Activated naive CD4-positive, alpha-beta T cell treated with anti-CD3 and anti-CD28 coated beads for 36 hours (primary cell): ENCODE measurements at regions of chr12 and their contacts with region 1.

Region 1: GRCh38 chr12:57452937-57453509 is 2.1 kb upstream of the INHBE start:
- DNase-seq: peak; percentile 82
- H3K4me3 Mint-ChIP-seq: no peak overlapping the region
- H3K27ac Mint-ChIP-seq: peak overlapping the region; percentile 19
- H3K4me1 Mint-ChIP-seq: peaks cover 17% of the 10 kb centered on the region
- H3K27me3 Mint-ChIP-seq: no peaks in the 10 kb centered on the region

Region 2: GRCh38 chr12:57213058-57213715 is 239.8 kb before region 1 on chr12:
- CTCF ChIA-PET with region 1: interaction called, 16 read pairs
- intact Hi-C with region 1: no loop called
- DNase-seq: peak; percentile 92
- H3K4me3 Mint-ChIP-seq: no peak overlapping the region
- H3K27ac Mint-ChIP-seq: no peak overlapping the region
- H3K4me1 Mint-ChIP-seq: peaks cover 28% of the 10 kb centered on the region
- H3K27me3 Mint-ChIP-seq: peaks cover 39% of the 10 kb centered on the region

Region 3: GRCh38 chr12:57268264-57268663 is 184.8 kb before region 1 on chr12:
- CTCF ChIA-PET with region 1: interaction called, 135 read pairs
- intact Hi-C with region 1: loop called (anchors 1 kb)
- DNase-seq: peak; percentile 51
- H3K4me3 Mint-ChIP-seq: no peak overlapping the region
- H3K27ac Mint-ChIP-seq: peak overlapping the region; percentile 80
- H3K4me1 Mint-ChIP-seq: peaks cover 7% of the 10 kb centered on the region
- H3K27me3 Mint-ChIP-seq: no peaks in the 10 kb centered on the region

Region 4: GRCh38 chr12:57401165-57401564 is 51.9 kb before region 1 on chr12:
- CTCF ChIA-PET with region 1: interaction called, 11 read pairs
- intact Hi-C with region 1: no loop called
- DNase-seq: no peak
- H3K4me3 Mint-ChIP-seq: no peak overlapping the region
- H3K27ac Mint-ChIP-seq: no peak overlapping the region
- H3K4me1 Mint-ChIP-seq: peaks cover 21% of the 10 kb centered on the region
- H3K27me3 Mint-ChIP-seq: no peaks in the 10 kb centered on the region

Region 5: GRCh38 chr12:57420482-57420881 is 32.5 kb before region 1 on chr12:
- CTCF ChIA-PET with region 1: interaction called, 11 read pairs
- intact Hi-C with region 1: no loop called
- DNase-seq: no peak
- H3K4me3 Mint-ChIP-seq: no peak overlapping the region
- H3K27ac Mint-ChIP-seq: no peak overlapping the region
- H3K4me1 Mint-ChIP-seq: peaks cover 27% of the 10 kb centered on the region
- H3K27me3 Mint-ChIP-seq: no peaks in the 10 kb centered on the region